ENCODE measurements at regions of chr6 and their contacts with region 1.

Region 1: DNA sequence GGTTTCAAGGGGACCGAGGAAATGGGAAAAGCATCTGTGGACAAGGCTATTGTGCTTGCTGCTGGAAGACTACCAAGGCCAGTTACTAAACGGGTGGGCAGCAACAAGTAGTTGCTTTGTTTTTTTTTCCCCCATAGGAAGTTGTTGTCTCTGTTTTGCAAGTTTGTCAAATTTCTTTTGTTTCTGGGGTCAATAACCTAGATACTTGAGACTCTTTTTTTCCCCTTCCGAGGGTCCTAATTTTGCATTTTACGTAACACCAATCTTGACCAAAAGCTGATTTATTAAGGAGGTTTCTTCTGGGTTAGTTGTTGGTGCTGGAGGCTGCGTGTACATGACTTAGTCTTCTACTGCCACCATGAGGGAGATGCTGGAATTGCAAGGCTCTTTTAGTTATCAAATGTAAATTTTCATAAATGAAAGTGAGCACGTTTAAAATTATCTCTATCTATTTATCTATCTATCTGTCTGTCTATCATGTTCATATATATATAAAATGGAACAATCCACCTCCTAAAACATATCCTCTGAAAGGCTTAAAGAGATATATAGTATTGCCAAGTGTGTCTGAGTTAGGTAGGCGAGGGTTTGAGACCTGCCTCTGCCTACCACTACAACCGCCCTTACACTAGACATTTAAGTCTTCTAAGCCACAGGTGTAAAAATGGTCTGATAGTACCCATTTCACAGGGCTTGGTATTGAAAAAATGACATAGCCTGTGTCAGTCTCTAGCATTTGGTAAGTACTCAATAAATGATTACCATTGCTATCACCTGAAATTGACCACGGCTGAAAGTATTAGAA is 60.2 kb downstream of the GCLC start:
- DNase-seq: peak; percentile 21 to 85 (median 65)
- ATAC-seq: peak; percentile 65
- H3K4me3 ChIP-seq: no peak overlapping the region
- H3K4me3 Mint-ChIP-seq: no peak overlapping the region
- H3K27ac ChIP-seq: no peak overlapping the region
- H3K27ac Mint-ChIP-seq: no peak overlapping the region
- H3K4me1 ChIP-seq: no peaks in the 10 kb centered on the region
- H3K4me1 Mint-ChIP-seq: peaks cover 14% of the 10 kb centered on the region
- H3K27me3 ChIP-seq: peaks cover 6 to 8% of the 10 kb centered on the region in 2 experiments
- H3K27me3 Mint-ChIP-seq: peaks cover 32% of the 10 kb centered on the region
- CTCF ChIP-seq: peak; percentile 99

Region 2: DNA sequence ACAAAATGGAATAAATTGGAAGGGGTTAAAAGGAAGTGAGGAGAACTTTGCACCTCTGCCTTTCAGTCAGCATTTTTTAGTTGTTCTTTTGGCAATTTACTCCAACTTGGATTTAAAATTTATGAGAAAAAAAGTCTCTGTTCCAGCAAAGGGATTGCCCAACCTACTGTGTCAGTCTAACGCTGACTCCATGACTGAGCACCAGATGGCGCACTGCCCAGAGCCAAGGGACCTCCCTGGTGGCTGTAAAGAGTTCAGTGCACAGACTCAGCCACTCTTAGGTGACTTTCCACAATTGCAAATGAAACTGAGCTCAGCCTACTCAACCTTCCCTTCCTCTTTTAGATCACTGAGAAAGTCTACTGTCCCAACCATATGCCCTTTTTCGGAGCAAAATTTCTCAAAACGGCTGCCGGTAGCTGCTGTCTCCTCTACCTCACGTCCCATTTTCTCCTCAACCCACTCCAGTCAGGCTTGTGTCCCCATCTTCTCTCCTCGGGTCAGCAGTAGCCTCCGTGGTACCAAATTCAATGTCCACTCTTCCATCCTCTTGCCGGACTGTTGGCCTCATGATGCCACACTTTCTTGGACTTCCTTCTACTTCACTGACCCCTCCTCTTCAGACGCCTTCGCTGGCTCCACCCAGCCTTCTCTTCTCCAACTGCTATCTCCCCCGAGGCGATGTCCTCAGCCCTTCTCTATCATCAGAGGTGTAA is 760.1 kb before region 1 on chr6:
- CTCF ChIA-PET with region 1: no interaction called
- POLR2A ChIA-PET with region 1: no interaction called
- intact Hi-C with region 1: loop called (anchors 10 kb)
- DNase-seq: peak; percentile 11 to 61 (median 32)
- ATAC-seq: peak; percentile 75
- H3K4me3 ChIP-seq: no peak overlapping the region
- H3K4me3 Mint-ChIP-seq: no peak overlapping the region
- H3K27ac ChIP-seq: no peak overlapping the region
- H3K27ac Mint-ChIP-seq: no peak overlapping the region
- H3K4me1 ChIP-seq: no peaks in the 10 kb centered on the region
- H3K4me1 Mint-ChIP-seq: no peaks in the 10 kb centered on the region
- H3K27me3 ChIP-seq: no peaks in the 10 kb centered on the region
- H3K27me3 Mint-ChIP-seq: no peaks in the 10 kb centered on the region
- CTCF ChIP-seq: peak; percentile 30

Region 3: GRCh38 chr6:52839119-52840055 is 645.3 kb before region 1 on chr6:
- CTCF ChIA-PET with region 1: no interaction called
- POLR2A ChIA-PET with region 1: no interaction called
- intact Hi-C with region 1: loop called in 1 of 2 experiments (anchors 5 kb)
- DNase-seq: peak in 13 of 14 experiments; percentile 13 to 69 (median 28)
- ATAC-seq: peak; percentile 74
- H3K4me3 ChIP-seq: no peak overlapping the region
- H3K4me3 Mint-ChIP-seq: no peak overlapping the region
- H3K27ac ChIP-seq: no peak overlapping the region
- H3K27ac Mint-ChIP-seq: no peak overlapping the region
- H3K4me1 ChIP-seq: peaks cover 6% of the 10 kb centered on the region
- H3K4me1 Mint-ChIP-seq: no peaks in the 10 kb centered on the region
- H3K27me3 ChIP-seq: peaks cover 7 to 11% of the 10 kb centered on the region in 2 experiments
- H3K27me3 Mint-ChIP-seq: peaks cover 57% of the 10 kb centered on the region
- CTCF ChIP-seq: peak; percentile 76

Region 4: GRCh38 chr6:53294095-53294494 is 190.6 kb before region 1 on chr6:
- CTCF ChIA-PET with region 1: no interaction called
- POLR2A ChIA-PET with region 1: no interaction called
- intact Hi-C with region 1: loop called (anchors 5 kb)
- DNase-seq: peak in 3 of 14 experiments; percentile 22 to 46 (median 40)
- ATAC-seq: no peak
- H3K4me3 ChIP-seq: no peak overlapping the region
- H3K4me3 Mint-ChIP-seq: no peak overlapping the region
- H3K27ac ChIP-seq: peak overlapping the region in 1 of 2 donors; percentile 23
- H3K27ac Mint-ChIP-seq: peak overlapping the region; percentile 73
- H3K4me1 ChIP-seq: peaks cover 53% of the 10 kb centered on the region
- H3K4me1 Mint-ChIP-seq: peaks cover 89% of the 10 kb centered on the region
- H3K27me3 ChIP-seq: no peaks in the 10 kb centered on the region
- H3K27me3 Mint-ChIP-seq: no peaks in the 10 kb centered on the region
- CTCF ChIP-seq: peak; percentile 33

Region 5: DNA sequence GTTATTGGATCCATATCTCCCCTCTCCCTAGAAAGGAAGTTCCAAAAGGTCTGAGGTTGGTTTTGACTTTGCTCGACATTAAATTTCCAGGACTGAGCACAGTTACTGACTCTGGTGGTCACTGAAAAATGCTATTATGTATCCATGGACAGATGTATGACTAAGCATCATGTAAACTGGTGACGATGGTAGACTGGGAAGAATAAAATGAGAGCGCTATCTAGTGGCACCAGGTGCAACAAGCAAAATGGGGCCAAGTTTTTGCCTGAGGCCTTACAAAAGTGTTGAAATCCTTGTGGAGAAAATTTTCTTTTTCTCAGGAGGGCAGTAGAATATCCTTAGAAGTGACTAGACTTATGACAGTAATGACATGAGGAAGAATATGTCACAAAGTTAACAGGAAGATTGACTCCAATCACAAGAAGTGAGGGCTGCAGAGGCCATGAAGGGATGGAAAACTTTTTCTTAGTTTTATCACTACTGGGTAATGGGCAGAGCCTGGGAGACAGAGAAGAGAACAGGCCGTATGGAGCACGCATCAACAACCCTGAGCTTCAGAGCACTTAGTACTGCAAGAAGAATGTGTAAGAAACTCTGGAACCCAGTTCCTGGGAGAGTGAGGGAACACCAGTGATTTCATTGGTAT is 47.0 kb before region 1 on chr6:
- CTCF ChIA-PET with region 1: interaction called, 3 read pairs
- POLR2A ChIA-PET with region 1: interaction called, 3 read pairs
- intact Hi-C with region 1: loop called in 1 of 2 experiments (anchors 2 kb)
- DNase-seq: peak in 5 of 14 experiments; percentile 7 to 64 (median 44)
- ATAC-seq: peak; percentile 54
- H3K4me3 ChIP-seq: no peak overlapping the region
- H3K4me3 Mint-ChIP-seq: no peak overlapping the region
- H3K27ac ChIP-seq: no peak overlapping the region
- H3K27ac Mint-ChIP-seq: no peak overlapping the region
- H3K4me1 ChIP-seq: no peaks in the 10 kb centered on the region
- H3K4me1 Mint-ChIP-seq: no peaks in the 10 kb centered on the region
- H3K27me3 ChIP-seq: no peaks in the 10 kb centered on the region
- H3K27me3 Mint-ChIP-seq: peaks cover 3% of the 10 kb centered on the region
- CTCF ChIP-seq: peak; percentile 60

Measured in CD4-positive, alpha-beta T cell (primary cell).